Activated B cell treated with CpG ODN at 0.5 μM for 24 hours (primary cell): ENCODE measurements at regions of chr18 and their contacts with region 1.

Region 1: DNA sequence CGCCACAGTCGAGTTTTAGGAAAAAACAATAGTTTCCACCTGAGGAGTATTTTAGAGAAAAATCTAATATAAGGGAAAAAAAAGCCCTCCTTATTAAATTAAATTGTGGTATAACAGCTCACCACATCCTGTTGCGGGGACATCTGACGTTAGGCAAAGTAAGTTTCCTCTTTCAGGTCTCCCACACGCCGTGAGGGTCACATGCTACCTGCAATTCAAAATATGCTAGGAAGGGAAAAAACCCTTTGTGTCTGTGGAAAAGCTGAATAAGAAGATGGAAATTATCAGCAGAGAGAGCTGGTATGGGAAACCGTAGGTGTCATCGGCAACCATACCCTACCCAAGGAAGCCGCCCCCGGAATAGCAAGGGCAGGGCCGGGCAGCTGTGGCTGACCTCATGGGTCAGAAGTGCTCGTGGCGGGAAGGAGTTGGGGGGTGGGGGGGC is 128.0 kb downstream of the NFATC1 start:
- DNase-seq: no peak
- ATAC-seq: peak; percentile 63
- H3K4me3 Mint-ChIP-seq: peak overlapping the region; percentile 81
- H3K27ac Mint-ChIP-seq: peak overlapping the region; percentile 91
- H3K4me1 Mint-ChIP-seq: peaks cover 64% of the 10 kb centered on the region
- H3K27me3 Mint-ChIP-seq: no peaks in the 10 kb centered on the region
- CTCF ChIP-seq: no peak

Region 2: DNA sequence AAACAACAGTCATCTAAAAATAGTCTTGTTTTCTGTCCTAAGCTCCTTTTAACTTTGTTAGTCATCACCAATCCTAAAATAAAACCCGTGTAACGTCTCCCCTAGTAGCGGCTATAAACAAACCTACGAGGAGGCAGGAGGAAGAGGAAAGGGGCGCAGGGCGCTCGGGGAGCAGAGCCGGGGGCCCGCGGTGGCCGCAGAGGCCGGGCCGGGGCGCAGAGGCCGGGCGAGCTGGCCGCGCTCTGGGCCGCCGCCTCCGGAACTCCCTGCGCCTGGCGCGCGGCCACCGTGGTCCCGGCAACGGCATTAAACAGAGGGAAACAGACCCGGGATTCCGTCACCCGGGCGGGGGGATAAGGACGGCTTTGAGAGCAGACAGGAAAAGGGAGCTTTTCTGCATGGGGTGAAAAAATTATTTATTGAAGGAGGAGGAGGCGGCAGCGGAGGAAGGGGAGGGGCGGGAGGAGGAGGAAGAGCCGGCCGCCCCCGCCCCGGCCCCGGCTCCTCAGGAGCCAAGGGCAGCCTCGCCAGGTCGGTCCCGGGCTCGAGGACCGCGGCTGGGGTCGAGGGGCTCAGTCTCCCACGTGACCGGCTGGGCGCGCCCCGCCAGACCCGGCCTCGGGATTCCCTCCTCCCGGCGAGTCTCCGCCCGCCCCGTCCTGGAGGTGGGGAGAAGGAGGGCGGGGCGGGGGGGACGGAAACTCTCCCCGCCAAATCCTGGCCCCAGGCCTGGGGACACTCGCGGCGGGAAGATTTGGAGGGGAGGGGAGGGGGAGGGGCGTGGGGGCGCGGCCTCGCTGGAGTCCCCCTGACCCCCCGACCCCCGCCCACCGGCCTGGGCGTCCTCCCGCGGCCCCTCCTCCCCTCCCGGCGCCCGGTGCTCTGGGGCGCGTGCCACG is 129.9 kb before region 1 on chr18:
- CTCF ChIA-PET with region 1: interaction called, 30 read pairs
- POLR2A ChIA-PET with region 1: interaction called, 38 read pairs
- intact Hi-C with region 1: loop called (anchors 1 kb)
- DNase-seq: peak; percentile 52
- ATAC-seq: peak; percentile 13
- H3K4me3 Mint-ChIP-seq: peak overlapping the region; percentile 84
- H3K27ac Mint-ChIP-seq: peak overlapping the region; percentile 71
- H3K4me1 Mint-ChIP-seq: peaks cover 35% of the 10 kb centered on the region
- H3K27me3 Mint-ChIP-seq: no peaks in the 10 kb centered on the region
- CTCF ChIP-seq: no peak

Region 3: DNA sequence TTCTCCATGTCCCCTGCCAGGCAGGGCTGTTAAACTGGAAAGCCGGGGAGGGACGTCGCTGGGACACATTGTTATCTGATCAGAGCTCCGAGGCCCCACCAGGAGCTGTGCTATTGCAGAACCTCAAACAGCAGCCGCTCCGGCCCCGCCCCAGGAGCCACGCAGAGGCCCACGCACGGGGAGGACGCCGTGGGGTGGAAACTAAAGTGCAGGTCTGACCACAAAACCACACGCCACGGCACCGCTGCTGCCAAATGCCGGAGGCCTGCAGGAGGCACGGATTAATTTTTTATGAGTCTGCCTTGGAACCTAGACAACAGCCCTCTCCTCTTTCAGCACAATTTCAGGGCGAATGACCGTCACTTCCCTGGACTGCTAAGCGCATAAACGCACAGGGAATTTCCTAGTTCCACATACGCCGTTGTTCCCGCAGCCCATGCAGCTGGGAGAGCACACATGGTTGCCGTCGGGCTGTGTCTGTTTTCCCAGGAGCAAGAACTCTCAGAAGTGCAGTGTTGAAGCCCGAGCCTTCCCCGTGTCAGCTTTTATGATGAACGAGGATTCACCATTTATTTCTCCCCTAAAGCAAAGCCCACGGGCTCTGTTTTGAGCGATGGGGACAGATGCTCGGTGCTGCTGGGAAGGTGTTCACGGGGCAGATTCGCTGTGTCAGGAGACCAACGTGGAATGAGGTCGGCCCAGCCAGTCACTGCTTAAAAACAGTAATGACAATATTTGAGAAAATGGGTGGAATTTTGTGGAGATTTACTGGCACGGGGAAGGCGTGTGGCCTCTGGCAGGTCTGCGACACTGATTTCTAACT is 84.3 kb before region 1 on chr18:
- CTCF ChIA-PET with region 1: interaction called, 8 read pairs
- POLR2A ChIA-PET with region 1: interaction called, 18 read pairs
- intact Hi-C with region 1: loop called (anchors 1 kb)
- DNase-seq: no peak
- ATAC-seq: no peak
- H3K4me3 Mint-ChIP-seq: peak overlapping the region; percentile 35
- H3K27ac Mint-ChIP-seq: peak overlapping the region; percentile 53
- H3K4me1 Mint-ChIP-seq: peaks cover 82% of the 10 kb centered on the region
- H3K27me3 Mint-ChIP-seq: no peaks in the 10 kb centered on the region
- CTCF ChIP-seq: no peak

Region 4: DNA sequence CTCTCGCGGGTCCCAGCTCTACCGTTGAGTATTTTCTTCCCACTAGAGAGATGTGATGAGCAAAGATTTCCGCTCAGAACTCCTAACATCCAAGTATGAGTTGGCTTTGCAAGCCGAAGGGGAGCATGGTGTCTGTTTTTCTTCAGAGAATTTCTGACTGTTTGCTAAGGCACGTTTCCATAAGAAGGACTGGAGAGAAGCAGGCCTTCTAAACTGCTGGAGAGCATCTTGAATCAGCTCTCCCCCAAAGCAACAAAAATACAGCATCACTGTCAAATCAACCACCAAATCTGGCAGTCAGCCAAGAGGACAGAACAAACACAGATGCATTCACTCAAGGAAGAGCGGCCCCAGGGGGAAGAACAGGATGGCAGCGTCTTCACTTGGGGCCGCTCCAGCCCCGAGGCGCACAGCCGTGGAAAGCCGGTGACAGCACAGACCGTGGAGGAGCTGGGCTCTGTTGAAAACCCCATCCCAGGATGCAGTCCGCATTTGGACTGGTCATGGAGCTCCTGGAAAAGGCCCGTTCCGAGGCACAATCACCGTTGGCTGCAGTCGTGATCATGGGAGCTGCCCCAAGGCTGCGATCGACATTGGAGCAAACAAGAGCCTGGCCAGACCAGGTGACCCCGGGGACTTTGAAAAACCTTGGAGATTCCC is 26.6 kb before region 1 on chr18:
- CTCF ChIA-PET with region 1: interaction called, 4 read pairs
- POLR2A ChIA-PET with region 1: interaction called, 23 read pairs
- intact Hi-C with region 1: loop called (anchors 1 kb)
- DNase-seq: no peak
- ATAC-seq: peak; percentile 79
- H3K4me3 Mint-ChIP-seq: peak overlapping the region; percentile 64
- H3K27ac Mint-ChIP-seq: peak overlapping the region; percentile 80
- H3K4me1 Mint-ChIP-seq: peaks cover 33% of the 10 kb centered on the region
- H3K27me3 Mint-ChIP-seq: no peaks in the 10 kb centered on the region
- CTCF ChIP-seq: no peak

Region 5: GRCh38 chr18:79542876-79543750 is 19.4 kb after region 1 on chr18:
- CTCF ChIA-PET with region 1: no interaction called
- POLR2A ChIA-PET with region 1: no interaction called
- intact Hi-C with region 1: loop called (anchors 1 kb)
- DNase-seq: no peak
- ATAC-seq: no peak
- H3K4me3 Mint-ChIP-seq: no peak overlapping the region
- H3K27ac Mint-ChIP-seq: no peak overlapping the region
- H3K4me1 Mint-ChIP-seq: no peaks in the 10 kb centered on the region
- H3K27me3 Mint-ChIP-seq: no peaks in the 10 kb centered on the region
- CTCF ChIP-seq: no peak

Region 6: GRCh38 chr18:80034068-80034851 is 510.5 kb after region 1 on chr18 and contains the start of gene RBFA:
- CTCF ChIA-PET with region 1: no interaction called
- POLR2A ChIA-PET with region 1: no interaction called
- intact Hi-C with region 1: loop called (anchors 2 kb)
- DNase-seq: peak; percentile 99
- ATAC-seq: peak; percentile 73
- H3K4me3 Mint-ChIP-seq: peak within 1 kb of the TSS; percentile 90
- H3K27ac Mint-ChIP-seq: peak within 1 kb of the TSS; percentile 93
- H3K4me1 Mint-ChIP-seq: peaks cover 24% of the 10 kb centered on the region
- H3K27me3 Mint-ChIP-seq: no peaks in the 10 kb centered on the region
- CTCF ChIP-seq: no peak
- total RNA-seq, gene RBFA: 21.6 and 23.3 TPM in 2 replicates